Heart left ventricle (tissue), 16 donors: ENCODE measurements at regions of chrX and their contacts with region 1.

Region 1: DNA sequence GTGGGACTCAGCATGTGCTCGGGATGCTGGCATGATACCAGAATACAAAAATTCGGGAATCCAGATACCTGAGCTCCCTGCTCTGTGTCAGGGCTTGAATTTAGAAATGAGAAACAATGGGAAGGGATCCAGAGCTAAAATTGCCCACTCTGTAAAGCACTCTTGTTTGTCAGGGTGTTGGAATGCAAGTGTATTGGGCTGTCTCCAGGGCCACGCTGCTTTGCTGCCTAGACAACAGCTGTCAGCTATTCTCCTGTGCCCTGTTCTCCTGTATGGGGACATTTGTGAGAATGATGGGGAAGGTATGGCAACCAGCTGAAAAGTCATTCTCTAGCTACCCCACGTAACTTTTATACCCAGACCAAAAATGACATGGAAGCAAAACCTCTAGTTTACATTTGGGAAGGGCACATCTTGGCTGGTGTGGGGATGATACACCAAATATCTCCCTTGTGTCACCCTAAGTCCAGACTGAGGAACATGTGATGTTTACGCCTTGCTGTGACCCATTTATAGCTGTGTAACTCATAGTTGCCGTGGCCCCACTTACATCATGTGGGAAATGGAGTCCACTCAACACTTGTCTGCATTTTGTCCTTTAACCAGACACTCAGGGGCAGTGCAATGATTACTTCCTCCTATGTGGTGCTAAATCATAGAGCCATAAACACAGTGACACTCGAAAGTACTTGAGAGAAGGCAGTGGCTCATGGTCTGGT is 46.6 kb downstream of the SMPX start:
- DNase-seq: peak in 4 of 5 donors; percentile 28 to 63 (median 41)
- ATAC-seq: peak; percentile 93 to 96 (median 94)
- H3K4me3 ChIP-seq: no peak overlapping the region
- H3K27ac ChIP-seq: peak overlapping the region in 8 of 12 donors; percentile 42 to 72 (median 62)
- H3K4me1 ChIP-seq: peaks cover 0 to 18% (median 0%) of the 10 kb centered on the region in 12 donors
- H3K27me3 ChIP-seq: peaks cover 0 to 4% (median 0%) of the 10 kb centered on the region in 9 donors
- CTCF ChIP-seq: no peak
- POLR2A ChIP-seq: no peak

Region 2: GRCh38 chrX:21666679-21667078 is 44.6 kb before region 1 on chrX:
- intact Hi-C with region 1: loop called in 1 of 10 experiments (anchors 10 kb)
- DNase-seq: no peak
- ATAC-seq: peak; percentile 64 to 86 (median 82)
- H3K4me3 ChIP-seq: no peak overlapping the region
- H3K27ac ChIP-seq: peak overlapping the region in 8 of 12 donors; percentile 25 to 77 (median 40)
- H3K4me1 ChIP-seq: no peaks in the 10 kb centered on the region
- H3K27me3 ChIP-seq: peaks cover 0 to 2% (median 0%) of the 10 kb centered on the region in 9 donors
- CTCF ChIP-seq: no peak
- POLR2A ChIP-seq: no peak

Region 3: GRCh38 chrX:21972721-21973120 is 261.4 kb after region 1 on chrX:
- intact Hi-C with region 1: no loop called
- DNase-seq: peak in 1 of 5 donors; percentile 55
- ATAC-seq: peak; percentile 66 to 88 (median 78)
- H3K4me3 ChIP-seq: no peak overlapping the region
- H3K27ac ChIP-seq: peak overlapping the region in 1 of 12 donors; percentile 34
- H3K4me1 ChIP-seq: peaks cover 0 to 13% (median 0%) of the 10 kb centered on the region in 12 donors
- H3K27me3 ChIP-seq: no peaks in the 10 kb centered on the region
- CTCF ChIP-seq: no peak
- POLR2A ChIP-seq: no peak